Breast epithelium (tissue), 4 donors: ENCODE measurements at regions of chr10 and their contacts with region 1.

Region 1: DNA sequence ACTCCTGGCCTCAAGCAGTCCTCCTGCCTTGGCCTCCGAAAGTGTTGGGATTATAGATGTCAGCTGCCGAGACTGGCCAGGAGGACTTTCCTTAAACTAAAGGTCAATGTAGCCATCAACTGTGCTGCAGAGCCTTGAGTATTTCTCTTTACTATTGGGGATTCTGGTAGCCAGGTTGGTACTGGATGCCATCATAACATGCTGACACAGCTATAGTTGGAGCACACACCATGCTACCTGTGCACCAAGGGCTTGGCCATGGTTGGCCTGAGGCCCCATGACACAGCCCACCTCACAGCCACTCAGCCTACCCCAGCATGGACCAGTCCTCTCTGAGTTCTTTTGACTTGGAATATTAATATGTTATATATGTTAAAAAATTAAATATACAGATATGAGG is 54.4 kb downstream of the HECTD2 start:
- DNase-seq: no peak
- H3K4me3 ChIP-seq: no peak overlapping the region
- H3K27ac ChIP-seq: no peak overlapping the region
- H3K4me1 ChIP-seq: no peaks in the 10 kb centered on the region
- H3K27me3 ChIP-seq: no peaks in the 10 kb centered on the region
- CTCF ChIP-seq: no peak
- POLR2A ChIP-seq: no peak

Region 2: GRCh38 chr10:91479583-91479982 is 15.1 kb after region 1 on chr10:
- intact Hi-C with region 1: loop called (anchors 2 kb)
- DNase-seq: no peak
- H3K4me3 ChIP-seq: no peak overlapping the region
- H3K27ac ChIP-seq: no peak overlapping the region
- H3K4me1 ChIP-seq: no peaks in the 10 kb centered on the region
- H3K27me3 ChIP-seq: no peaks in the 10 kb centered on the region
- CTCF ChIP-seq: no peak
- POLR2A ChIP-seq: no peak